CD8-positive, alpha-beta T cell (primary cell): ENCODE measurements at regions of chr5 and their contacts with region 1.

Region 1: DNA sequence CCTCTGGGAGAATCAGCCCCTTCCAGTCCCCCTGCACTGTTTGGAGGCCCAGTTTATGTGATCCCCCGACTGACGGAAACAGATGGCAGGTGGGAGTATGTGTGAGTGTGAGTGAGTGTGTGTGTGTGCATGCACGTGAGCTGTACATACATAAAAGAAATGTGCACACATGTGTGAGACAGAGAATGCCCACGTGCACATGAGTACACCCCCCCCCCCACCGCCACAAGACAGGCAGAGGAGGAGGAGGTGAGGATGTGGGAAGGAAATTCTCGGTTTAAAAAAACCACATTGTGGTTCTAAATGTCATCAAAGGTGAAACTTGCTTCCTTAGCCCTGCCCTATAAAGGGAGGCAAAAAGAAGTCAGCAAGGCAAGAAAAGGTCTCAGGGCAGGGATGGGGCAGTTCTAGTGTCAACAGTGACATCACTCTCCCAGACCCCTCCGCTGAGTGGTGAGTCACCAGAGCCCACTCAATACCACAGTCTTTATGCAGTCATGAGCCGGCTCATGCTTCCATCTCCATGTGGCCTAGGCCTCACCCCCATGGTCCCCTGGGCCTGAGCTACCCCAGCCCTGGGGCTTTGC is 79.2 kb upstream of the HSPA9 start:
- DNase-seq: peak; percentile 41 to 89 (median 64)
- ATAC-seq: peak; percentile 87
- H3K4me3 ChIP-seq: no peak overlapping the region
- H3K4me3 Mint-ChIP-seq: no peak overlapping the region
- H3K27ac ChIP-seq: no peak overlapping the region
- H3K27ac Mint-ChIP-seq: peak overlapping the region; percentile 76
- H3K4me1 ChIP-seq: peaks cover 20% of the 10 kb centered on the region
- H3K4me1 Mint-ChIP-seq: peaks cover 26% of the 10 kb centered on the region
- H3K27me3 ChIP-seq: peaks cover 55 to 57% of the 10 kb centered on the region in 2 experiments
- H3K27me3 Mint-ChIP-seq: peaks cover 87% of the 10 kb centered on the region
- CTCF ChIP-seq: no peak

Region 2: DNA sequence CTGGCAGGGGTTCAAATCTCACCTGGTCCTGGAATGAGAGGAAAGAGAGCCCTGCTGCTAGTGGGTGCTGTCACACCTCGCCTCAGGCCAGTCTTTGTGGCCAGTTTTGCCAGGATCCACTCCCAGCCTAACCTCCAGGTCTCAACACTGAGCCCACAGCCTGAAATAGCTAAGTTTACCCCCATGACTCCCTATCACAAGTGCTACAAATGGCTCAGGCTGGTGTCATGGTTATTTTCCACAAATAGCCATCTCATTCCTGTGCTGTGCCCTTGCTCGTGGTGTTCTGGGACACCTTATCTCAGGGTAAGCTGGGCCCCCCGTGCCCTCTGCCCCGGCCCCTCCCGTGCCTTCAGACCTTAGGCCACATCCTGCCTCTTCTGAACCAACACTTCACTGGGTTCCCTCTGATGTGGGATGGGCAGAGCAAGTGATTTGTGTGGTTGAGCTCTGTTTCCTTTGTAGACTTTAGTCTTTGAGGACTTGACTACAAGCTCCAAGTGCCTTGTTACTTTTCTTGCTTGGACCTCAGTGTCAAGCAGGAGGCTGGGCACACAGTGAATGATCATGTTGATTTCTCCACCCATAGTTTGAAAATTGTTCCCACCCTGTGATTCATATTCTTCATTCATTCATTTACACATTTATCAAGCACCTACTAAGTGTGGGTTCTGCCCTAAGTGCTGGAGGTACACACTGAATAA is 14.2 kb after region 1 on chr5:
- CTCF ChIA-PET with region 1: interaction called, 3 read pairs
- POLR2A ChIA-PET with region 1: interaction called, 5 read pairs
- intact Hi-C with region 1: loop called in 1 of 2 experiments (anchors 1 kb)
- DNase-seq: peak; percentile 18 to 79 (median 41)
- ATAC-seq: peak; percentile 82
- H3K4me3 ChIP-seq: no peak overlapping the region
- H3K4me3 Mint-ChIP-seq: no peak overlapping the region
- H3K27ac ChIP-seq: no peak overlapping the region
- H3K27ac Mint-ChIP-seq: no peak overlapping the region
- H3K4me1 ChIP-seq: peaks cover 28% of the 10 kb centered on the region
- H3K4me1 Mint-ChIP-seq: peaks cover 26% of the 10 kb centered on the region
- H3K27me3 ChIP-seq: peaks cover 55 to 60% of the 10 kb centered on the region in 2 experiments
- H3K27me3 Mint-ChIP-seq: peaks cover 84% of the 10 kb centered on the region
- CTCF ChIP-seq: no peak

Region 3: GRCh38 chr5:138706655-138707480 is 52.5 kb after region 1 on chr5:
- CTCF ChIA-PET with region 1: no interaction called
- POLR2A ChIA-PET with region 1: no interaction called
- intact Hi-C with region 1: no loop called
- DNase-seq: no peak
- ATAC-seq: no peak
- H3K4me3 ChIP-seq: no peak overlapping the region
- H3K4me3 Mint-ChIP-seq: no peak overlapping the region
- H3K27ac ChIP-seq: no peak overlapping the region
- H3K27ac Mint-ChIP-seq: no peak overlapping the region
- H3K4me1 ChIP-seq: no peaks in the 10 kb centered on the region
- H3K4me1 Mint-ChIP-seq: no peaks in the 10 kb centered on the region
- H3K27me3 ChIP-seq: peaks cover 6 to 10% of the 10 kb centered on the region in 2 experiments
- H3K27me3 Mint-ChIP-seq: peaks cover 64% of the 10 kb centered on the region
- CTCF ChIP-seq: no peak

Region 4: DNA sequence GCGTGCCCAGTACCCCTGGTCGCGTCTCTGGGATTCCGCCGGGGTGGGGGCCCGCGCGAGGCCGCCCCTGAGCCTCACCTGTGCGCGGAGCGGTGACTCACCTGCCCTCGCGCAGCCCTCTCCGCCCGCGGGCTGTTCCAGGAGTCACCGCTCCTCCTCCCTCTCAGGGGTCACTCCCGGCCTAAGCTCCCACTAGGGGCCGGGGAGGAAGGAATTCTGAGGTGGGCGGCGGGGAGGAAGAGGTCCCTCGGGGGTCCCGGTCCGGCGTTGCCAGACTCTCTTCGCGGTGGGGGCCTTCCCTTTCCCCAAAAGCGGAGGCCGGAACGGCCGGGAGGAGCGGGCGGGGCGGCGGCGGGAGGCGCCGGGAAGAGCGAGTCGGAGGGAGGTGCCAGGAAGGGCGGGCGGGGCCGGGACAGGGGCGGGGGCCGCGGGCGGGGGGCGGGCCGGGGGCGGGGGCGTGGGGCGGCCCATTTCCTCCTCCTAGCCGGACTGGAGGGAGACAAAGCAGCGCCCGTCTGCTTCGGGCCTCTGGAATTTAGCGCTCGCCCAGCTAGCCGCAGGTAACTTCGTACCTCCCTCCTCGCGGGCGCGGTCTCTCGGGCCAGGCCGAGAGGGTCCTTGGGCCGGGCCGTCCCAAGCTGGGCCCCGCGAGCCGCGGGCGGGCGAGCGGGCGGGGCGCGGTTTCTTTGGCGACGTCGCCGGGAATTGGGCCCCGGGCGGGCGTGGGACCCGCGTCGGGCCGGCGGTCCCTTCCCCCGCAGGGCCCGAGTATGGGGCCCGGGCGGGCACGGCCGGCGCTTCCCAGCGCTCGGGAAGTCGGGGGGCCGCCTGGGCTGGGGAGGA is 98.8 kb after region 1 on chr5 and contains the start of gene CTNNA1:
- CTCF ChIA-PET with region 1: no interaction called
- POLR2A ChIA-PET with region 1: no interaction called
- intact Hi-C with region 1: loop called in 1 of 2 experiments (anchors 10 kb)
- DNase-seq: peak in 8 of 9 experiments; percentile 33 to 68 (median 50)
- ATAC-seq: peak; percentile 79
- H3K4me3 ChIP-seq: peak within 1 kb of the TSS; percentile 45 to 60
- H3K4me3 Mint-ChIP-seq: peak within 1 kb of the TSS; percentile 81
- H3K27ac ChIP-seq: no peak within 1 kb of the TSS
- H3K27ac Mint-ChIP-seq: no peak within 1 kb of the TSS
- H3K4me1 ChIP-seq: peaks cover 14% of the 10 kb centered on the region
- H3K4me1 Mint-ChIP-seq: peaks cover 15% of the 10 kb centered on the region
- H3K27me3 ChIP-seq: peaks cover 2 to 7% of the 10 kb centered on the region in 2 experiments
- H3K27me3 Mint-ChIP-seq: peaks cover 39% of the 10 kb centered on the region
- CTCF ChIP-seq: no peak
- total RNA-seq, gene CTNNA1: 2.9 to 5.0 TPM